HepG2 (cell line): ENCODE measurements at regions of chr20 and their contacts with region 1.

Region 1: DNA sequence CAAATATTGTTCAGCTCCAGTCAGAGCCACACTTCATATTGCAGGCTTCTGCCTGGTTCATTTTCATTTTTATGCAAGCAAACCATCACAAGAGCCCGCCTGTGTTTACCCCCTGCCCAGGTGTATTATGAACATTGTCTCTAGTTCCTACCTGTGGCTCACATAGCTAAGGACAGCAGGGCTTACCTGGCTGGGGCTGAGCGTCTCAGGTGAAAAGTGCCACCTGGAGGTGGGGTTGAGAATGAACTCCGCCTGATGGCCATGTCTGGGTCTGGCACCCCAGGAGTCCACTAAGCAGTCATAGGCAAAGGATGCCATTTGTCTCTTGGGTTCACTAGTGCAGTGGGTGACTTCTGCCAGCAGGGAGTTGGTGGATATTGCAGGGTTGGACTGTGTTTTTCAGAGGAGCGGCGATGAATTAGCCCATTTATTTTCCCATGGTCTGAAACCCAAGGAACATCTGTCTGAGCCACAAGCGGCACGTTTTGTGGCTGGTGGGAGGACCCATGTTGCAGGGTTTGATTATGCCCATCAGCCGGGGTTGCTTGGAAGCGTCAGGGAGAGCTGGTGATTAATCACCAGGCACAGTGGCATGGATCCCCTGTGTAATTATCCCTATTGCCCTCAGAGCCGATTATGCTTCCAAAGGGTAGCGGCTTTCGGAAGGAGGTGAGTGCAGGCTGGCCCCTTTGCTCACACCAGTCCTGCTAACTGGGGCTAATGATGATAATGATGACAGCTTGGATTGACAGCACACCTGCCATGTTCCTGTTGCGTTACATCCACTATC is 92.1 kb downstream of the CDH26 start:
- DNase-seq: peak; percentile 18
- ATAC-seq: peak; percentile 87
- H3K4me3 ChIP-seq: no peak overlapping the region
- H3K27ac ChIP-seq: no peak overlapping the region
- H3K4me1 ChIP-seq: peaks cover 10% of the 10 kb centered on the region; the same call in 1 of the 2 replicates
- H3K27me3 ChIP-seq: peaks cover 2 to 34% of the 10 kb centered on the region in 2 experiments; a peak in 3 of 5 replicates
- CTCF ChIP-seq: peak; percentile 60
- EP300 ChIP-seq: no peak
- POLR2A ChIP-seq: no peak
- RAD21 ChIP-seq: no peak

Region 2: GRCh38 chr20:59948828-59949720 is 101.3 kb before region 1 on chr20:
- CTCF ChIA-PET with region 1: interaction called, 4 read pairs
- POLR2A ChIA-PET with region 1: no interaction called
- in situ Hi-C with region 1: no loop called
- intact Hi-C with region 1: loop called (anchors 1 kb)
- DNase-seq: peak; percentile 63
- ATAC-seq: peak; percentile 69
- H3K4me3 ChIP-seq: no peak overlapping the region
- H3K27ac ChIP-seq: no peak overlapping the region
- H3K4me1 ChIP-seq: no peaks in the 10 kb centered on the region
- H3K27me3 ChIP-seq: no peaks in the 10 kb centered on the region
- CTCF ChIP-seq: peak; percentile 59
- EP300 ChIP-seq: no peak
- POLR2A ChIP-seq: no peak
- RAD21 ChIP-seq: no peak